IMR-90 (cell line): ENCODE measurements at regions of chr15 and their contacts with region 1.

Region 1: DNA sequence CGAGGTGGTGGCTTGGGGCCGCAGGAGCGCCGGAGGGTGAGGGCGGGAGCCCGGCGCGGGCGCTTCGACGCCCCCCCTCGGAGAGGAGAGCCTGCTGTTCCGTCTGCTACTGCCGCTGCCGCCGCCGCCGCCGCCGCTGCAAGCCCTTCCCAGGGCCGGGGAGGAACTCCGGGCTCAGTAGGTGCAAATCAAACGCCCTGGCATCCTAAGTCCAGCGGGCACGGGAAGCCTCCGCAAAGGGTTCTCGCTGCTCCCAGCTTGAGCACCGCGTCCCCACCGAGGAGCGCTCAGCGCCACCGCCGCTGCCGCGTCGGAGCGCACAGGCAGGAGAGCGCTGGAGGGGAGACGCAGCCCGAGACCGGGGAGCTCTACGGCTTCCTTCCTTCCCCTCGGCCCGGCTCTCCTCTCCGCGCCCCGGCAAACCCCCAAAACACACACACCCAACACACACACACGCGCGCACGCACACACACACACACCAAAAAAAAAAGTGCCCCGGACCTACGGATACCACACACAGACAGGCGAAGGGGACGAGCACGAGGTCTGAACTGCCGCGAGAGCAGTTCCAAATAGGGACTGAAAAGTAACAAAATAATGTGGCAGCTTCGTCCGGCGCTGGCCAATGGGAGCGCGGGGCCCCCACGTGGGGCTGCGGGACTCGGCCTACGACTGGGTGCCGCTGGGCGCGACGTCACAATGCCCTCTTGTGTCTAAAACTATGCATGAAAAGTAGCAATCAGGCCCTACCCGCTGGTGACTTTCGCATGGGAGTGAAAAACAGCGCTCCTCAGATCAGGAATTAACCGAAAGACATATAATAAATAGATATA is at the start of gene TLE3:
- DNase-seq: peak; percentile 98
- ATAC-seq: peak; percentile 52
- H3K4me3 ChIP-seq: peak within 1 kb of the TSS; percentile 94
- H3K27ac ChIP-seq: peak within 1 kb of the TSS; percentile 66
- H3K4me1 ChIP-seq: peaks cover 33% of the 10 kb centered on the region
- H3K27me3 ChIP-seq: peaks cover 5% of the 10 kb centered on the region
- CTCF ChIP-seq: peak; percentile 43
- POLR2A ChIP-seq: peak; percentile 91
- RAD21 ChIP-seq: peak; percentile 58
- total RNA-seq, gene TLE3: 5.6 and 6.5 TPM in 2 replicates

Region 2: GRCh38 chr15:69523010-69524001 is 574.2 kb before region 1 on chr15:
- CTCF ChIA-PET with region 1: no interaction called
- POLR2A ChIA-PET with region 1: interaction called, 5 read pairs
- dilution Hi-C with region 1: no loop called
- in situ Hi-C with region 1: no loop called
- intact Hi-C with region 1: loop called (anchors 1 kb)
- DNase-seq: peak; percentile 72
- ATAC-seq: peak; percentile 98
- H3K4me3 ChIP-seq: no peak overlapping the region
- H3K27ac ChIP-seq: no peak overlapping the region
- H3K4me1 ChIP-seq: no peaks in the 10 kb centered on the region
- H3K27me3 ChIP-seq: peaks cover 25% of the 10 kb centered on the region
- CTCF ChIP-seq: peak; percentile 83
- POLR2A ChIP-seq: no peak
- RAD21 ChIP-seq: peak; percentile 90

Region 3: DNA sequence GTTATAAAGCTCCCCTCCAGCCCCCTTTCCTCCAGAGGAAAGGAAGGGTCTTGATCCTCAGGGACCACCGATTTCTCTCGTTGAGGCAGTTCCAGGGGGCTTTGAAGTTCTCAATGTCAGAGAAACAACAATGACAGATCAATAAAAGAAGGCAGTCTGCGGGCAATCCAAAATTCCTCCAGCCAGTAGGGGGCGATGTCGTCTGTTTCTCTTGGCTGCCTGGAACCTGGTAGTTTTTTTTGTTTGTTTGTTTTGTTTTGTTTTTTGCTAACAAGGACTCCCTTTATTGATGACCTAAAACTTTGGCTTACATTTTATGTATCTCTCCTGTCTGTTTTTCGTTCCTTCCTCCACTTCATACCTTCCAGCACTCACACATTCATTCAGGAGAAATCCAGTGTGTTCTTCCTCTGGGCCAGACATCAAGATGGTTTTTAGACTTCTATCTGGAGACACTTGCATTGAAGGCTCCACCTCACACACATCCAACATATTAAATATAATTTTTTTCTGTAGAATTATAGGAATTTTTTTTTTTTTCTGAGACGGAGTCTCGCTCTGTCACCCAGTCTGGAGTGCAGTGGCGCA is 368.3 kb before region 1 on chr15:
- CTCF ChIA-PET with region 1: no interaction called
- POLR2A ChIA-PET with region 1: no interaction called
- dilution Hi-C with region 1: no loop called
- in situ Hi-C with region 1: no loop called
- intact Hi-C with region 1: loop called (anchors 2 kb)
- DNase-seq: peak; percentile 8
- ATAC-seq: no peak
- H3K4me3 ChIP-seq: no peak overlapping the region
- H3K27ac ChIP-seq: no peak overlapping the region
- H3K4me1 ChIP-seq: no peaks in the 10 kb centered on the region
- H3K27me3 ChIP-seq: peaks cover 56% of the 10 kb centered on the region
- CTCF ChIP-seq: peak; percentile 73
- POLR2A ChIP-seq: no peak
- RAD21 ChIP-seq: peak; percentile 79

Region 4: DNA sequence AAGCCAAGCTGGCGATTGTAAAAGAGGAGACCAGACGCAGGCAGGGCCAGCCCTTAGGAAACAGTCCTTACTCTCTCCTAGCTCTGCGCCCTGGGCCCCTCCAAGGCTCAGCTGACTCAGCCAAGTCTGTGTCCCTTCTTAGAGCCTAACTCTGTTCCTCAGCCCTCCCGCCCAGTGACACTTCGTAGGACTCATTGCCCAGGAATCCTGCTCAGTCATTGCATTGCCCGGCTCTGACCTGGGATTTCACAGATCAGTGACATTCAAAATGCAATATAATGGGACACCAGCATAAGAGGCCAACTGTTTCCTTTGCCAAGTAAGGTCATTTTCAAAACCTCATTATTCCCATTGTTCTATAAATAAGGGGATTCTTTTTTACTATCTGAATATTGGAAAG is 244.0 kb before region 1 on chr15:
- CTCF ChIA-PET with region 1: no interaction called
- POLR2A ChIA-PET with region 1: interaction called, 4 read pairs
- dilution Hi-C with region 1: no loop called
- in situ Hi-C with region 1: no loop called
- intact Hi-C with region 1: loop called (anchors 5 kb)
- DNase-seq: peak; percentile 84
- ATAC-seq: peak; percentile 71
- H3K4me3 ChIP-seq: no peak overlapping the region
- H3K27ac ChIP-seq: peak overlapping the region; percentile 73
- H3K4me1 ChIP-seq: peaks cover 24% of the 10 kb centered on the region
- H3K27me3 ChIP-seq: no peaks in the 10 kb centered on the region
- CTCF ChIP-seq: no peak
- POLR2A ChIP-seq: peak; percentile 34; the same call in 1 of the 2 replicates
- RAD21 ChIP-seq: 0 out of 2 replicates have a peak, but pooled peaks have one; percentile 5

Region 5: DNA sequence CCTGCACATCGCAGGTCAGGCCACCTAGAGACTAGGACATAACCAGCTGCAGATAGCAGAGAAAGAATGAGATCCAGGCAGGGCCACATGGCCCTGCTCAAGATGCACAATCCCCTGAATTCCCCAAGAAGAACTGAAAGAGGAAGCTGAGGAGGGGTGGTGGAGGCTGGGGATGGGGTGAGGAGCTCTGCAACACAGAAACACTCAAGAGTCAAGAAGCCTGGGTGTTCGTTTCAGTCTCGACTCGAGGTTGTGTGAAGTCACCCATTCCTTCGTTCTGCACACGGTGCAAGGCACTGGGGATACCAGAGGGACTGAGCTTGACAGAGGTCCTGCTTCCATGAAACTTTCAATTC is 61.9 kb before region 1 on chr15:
- CTCF ChIA-PET with region 1: no interaction called
- POLR2A ChIA-PET with region 1: interaction called, 11 read pairs
- dilution Hi-C with region 1: no loop called
- in situ Hi-C with region 1: no loop called
- intact Hi-C with region 1: no loop called
- DNase-seq: no peak
- ATAC-seq: no peak
- H3K4me3 ChIP-seq: no peak overlapping the region
- H3K27ac ChIP-seq: no peak overlapping the region
- H3K4me1 ChIP-seq: peaks cover 6% of the 10 kb centered on the region; the same call in 1 of the 2 replicates
- H3K27me3 ChIP-seq: peaks cover 61% of the 10 kb centered on the region
- CTCF ChIP-seq: no peak
- POLR2A ChIP-seq: no peak
- RAD21 ChIP-seq: no peak

Region 6: GRCh38 chr15:70083946-70084345 is 13.6 kb before region 1 on chr15:
- CTCF ChIA-PET with region 1: no interaction called
- POLR2A ChIA-PET with region 1: no interaction called
- dilution Hi-C with region 1: no loop called
- in situ Hi-C with region 1: no loop called
- intact Hi-C with region 1: no loop called
- DNase-seq: no peak
- ATAC-seq: no peak
- H3K4me3 ChIP-seq: no peak overlapping the region
- H3K27ac ChIP-seq: no peak overlapping the region
- H3K4me1 ChIP-seq: peaks cover 6% of the 10 kb centered on the region
- H3K27me3 ChIP-seq: no peaks in the 10 kb centered on the region
- CTCF ChIP-seq: no peak
- POLR2A ChIP-seq: no peak
- RAD21 ChIP-seq: no peak

Region 7: DNA sequence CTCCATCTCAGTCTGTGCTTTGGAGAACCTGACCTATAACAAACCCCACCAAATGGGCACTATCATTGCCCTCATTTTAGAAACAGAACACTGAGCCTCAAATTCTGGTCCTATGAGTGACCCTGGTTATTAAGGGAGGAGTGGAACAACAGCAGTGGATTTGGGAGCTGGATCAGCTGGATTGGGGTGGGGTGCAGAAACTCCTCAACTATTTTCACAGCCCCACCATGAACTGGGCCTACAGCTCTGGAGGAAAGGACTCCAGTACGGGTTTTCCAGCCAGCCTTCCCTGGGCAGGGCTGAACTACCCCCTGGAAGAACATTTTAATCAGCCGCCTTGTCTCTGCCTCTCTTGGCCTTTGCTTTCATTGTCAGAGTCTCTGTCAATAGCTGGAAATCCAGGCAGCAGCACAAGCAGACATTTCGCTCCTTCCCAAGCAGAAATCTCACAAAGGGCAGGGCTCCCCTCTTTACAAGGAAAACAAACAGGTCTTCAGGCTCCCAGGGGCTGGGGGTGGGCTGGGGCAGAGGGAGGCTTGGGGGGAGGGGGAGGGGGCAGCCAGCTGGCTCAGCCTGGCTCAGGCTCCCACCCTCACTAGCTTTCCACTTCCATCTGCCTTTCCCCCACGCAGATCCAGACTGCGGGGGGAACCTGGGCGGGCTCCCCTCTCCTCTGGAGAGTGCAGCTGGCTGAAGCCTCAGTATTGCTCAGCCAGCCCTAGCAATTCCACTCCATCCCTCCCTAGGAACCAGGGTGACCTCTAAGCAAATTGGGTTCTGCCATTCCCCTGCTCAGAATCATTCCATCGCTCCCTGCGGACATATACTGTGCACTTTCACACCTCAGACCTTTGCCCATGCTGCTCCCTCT is 13.9 kb after region 1 on chr15:
- CTCF ChIA-PET with region 1: interaction called, 5 read pairs
- POLR2A ChIA-PET with region 1: interaction called, 4 read pairs
- dilution Hi-C with region 1: no loop called
- in situ Hi-C with region 1: no loop called
- intact Hi-C with region 1: loop called (anchors 1 kb)
- DNase-seq: peak; percentile 73
- ATAC-seq: peak; percentile 97
- H3K4me3 ChIP-seq: no peak overlapping the region
- H3K27ac ChIP-seq: no peak overlapping the region
- H3K4me1 ChIP-seq: peaks cover 4% of the 10 kb centered on the region; the same call in 1 of the 2 replicates
- H3K27me3 ChIP-seq: peaks cover 37% of the 10 kb centered on the region
- CTCF ChIP-seq: no peak
- POLR2A ChIP-seq: no peak
- RAD21 ChIP-seq: no peak

Region 8: GRCh38 chr15:70327856-70328678 is 230.5 kb after region 1 on chr15:
- CTCF ChIA-PET with region 1: no interaction called
- POLR2A ChIA-PET with region 1: no interaction called
- dilution Hi-C with region 1: no loop called
- in situ Hi-C with region 1: no loop called
- intact Hi-C with region 1: no loop called
- DNase-seq: peak; percentile 48
- ATAC-seq: peak; percentile 50
- H3K4me3 ChIP-seq: no peak overlapping the region
- H3K27ac ChIP-seq: no peak overlapping the region
- H3K4me1 ChIP-seq: peaks cover 9% of the 10 kb centered on the region; the same call in 1 of the 2 replicates
- H3K27me3 ChIP-seq: peaks cover 13% of the 10 kb centered on the region
- CTCF ChIP-seq: no peak
- POLR2A ChIP-seq: no peak
- RAD21 ChIP-seq: no peak

Region 9: GRCh38 chr15:70488002-70488605 is 390.6 kb after region 1 on chr15:
- CTCF ChIA-PET with region 1: no interaction called
- POLR2A ChIA-PET with region 1: interaction called, 3 read pairs
- dilution Hi-C with region 1: no loop called
- in situ Hi-C with region 1: loop called (anchors 25 kb)
- intact Hi-C with region 1: loop called (anchors 2 kb)
- DNase-seq: peak; percentile 67
- ATAC-seq: peak; percentile 70
- H3K4me3 ChIP-seq: no peak overlapping the region
- H3K27ac ChIP-seq: no peak overlapping the region
- H3K4me1 ChIP-seq: peaks cover 32% of the 10 kb centered on the region
- H3K27me3 ChIP-seq: peaks cover 13% of the 10 kb centered on the region
- CTCF ChIP-seq: peak; percentile 95
- POLR2A ChIP-seq: 0 out of 2 replicates have a peak, but pooled peaks have one; percentile 50
- RAD21 ChIP-seq: peak; percentile 97